ENCODE measurements at regions of chr14 and their contacts with region 1.

Region 1: GRCh38 chr14:73825551-73826188 is 26.0 kb upstream of the PTGR2 start:
- DNase-seq: peak; percentile 64 to 89
- ATAC-seq: peak; percentile 95 to 100 (median 99)
- H3K4me3 ChIP-seq: no peak overlapping the region
- H3K4me3 Mint-ChIP-seq: no peak overlapping the region
- H3K27ac ChIP-seq: no peak overlapping the region
- H3K27ac Mint-ChIP-seq: no peak overlapping the region
- H3K4me1 ChIP-seq: peaks cover 3% of the 10 kb centered on the region
- H3K4me1 Mint-ChIP-seq: peaks cover 0 to 7% of the 10 kb centered on the region in 2 donors
- H3K27me3 ChIP-seq: no peaks in the 10 kb centered on the region
- H3K27me3 Mint-ChIP-seq: no peaks in the 10 kb centered on the region
- CTCF ChIP-seq: peak; percentile 90

Region 2: DNA sequence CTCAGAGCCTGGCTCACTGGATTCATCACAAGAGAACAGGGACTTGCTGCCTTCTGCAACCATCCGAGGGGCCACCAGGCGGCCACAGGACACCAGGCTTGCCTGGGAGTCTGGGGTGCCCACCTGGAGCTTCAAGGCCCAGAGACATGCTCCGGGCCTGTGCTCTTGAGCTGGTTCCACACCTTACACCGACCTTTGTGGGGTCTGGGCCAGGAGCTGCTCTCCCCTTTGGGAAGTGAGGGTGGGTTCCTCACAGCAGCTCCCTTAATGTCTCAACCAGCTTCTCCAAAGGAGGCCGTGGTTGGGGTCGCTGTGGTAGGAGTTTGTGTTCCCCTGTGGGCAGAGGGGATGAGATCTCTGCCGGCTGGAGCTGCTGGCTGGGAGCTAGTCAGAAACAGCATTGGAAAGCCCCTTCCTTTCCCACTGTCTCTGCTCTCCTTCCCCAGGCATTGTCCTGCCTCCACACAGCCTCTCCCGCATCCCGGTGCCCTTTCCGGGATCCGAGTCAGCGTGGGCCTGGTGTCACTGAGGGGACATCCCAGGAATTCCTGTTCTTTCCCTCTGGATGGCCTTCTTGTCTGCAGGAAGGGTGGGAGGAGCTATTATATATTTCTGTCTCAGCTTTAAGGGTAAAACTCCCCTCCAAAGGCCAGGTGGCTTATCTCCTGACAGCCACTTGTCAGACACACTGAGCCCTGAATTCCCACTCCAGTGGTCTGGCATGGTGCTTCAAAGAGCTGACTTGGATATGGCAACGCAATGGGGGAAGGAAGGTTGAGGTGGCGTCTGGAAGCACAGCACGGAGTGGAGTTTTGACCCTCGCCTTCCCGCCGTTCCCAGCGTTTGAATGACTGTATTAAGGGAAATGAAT is 593.5 kb before region 1 on chr14:
- intact Hi-C with region 1: no loop called
- DNase-seq: no peak
- ATAC-seq: peak in 1 of 3 donors; percentile 37
- H3K4me3 ChIP-seq: no peak overlapping the region
- H3K4me3 Mint-ChIP-seq: no peak overlapping the region
- H3K27ac ChIP-seq: no peak overlapping the region
- H3K27ac Mint-ChIP-seq: no peak overlapping the region
- H3K4me1 ChIP-seq: peaks cover 4% of the 10 kb centered on the region
- H3K4me1 Mint-ChIP-seq: peaks cover 5 to 6% of the 10 kb centered on the region in 2 donors
- H3K27me3 ChIP-seq: peaks cover 13% of the 10 kb centered on the region
- H3K27me3 Mint-ChIP-seq: peaks cover 35 to 40% of the 10 kb centered on the region in 2 donors
- CTCF ChIP-seq: no peak

Region 3: DNA sequence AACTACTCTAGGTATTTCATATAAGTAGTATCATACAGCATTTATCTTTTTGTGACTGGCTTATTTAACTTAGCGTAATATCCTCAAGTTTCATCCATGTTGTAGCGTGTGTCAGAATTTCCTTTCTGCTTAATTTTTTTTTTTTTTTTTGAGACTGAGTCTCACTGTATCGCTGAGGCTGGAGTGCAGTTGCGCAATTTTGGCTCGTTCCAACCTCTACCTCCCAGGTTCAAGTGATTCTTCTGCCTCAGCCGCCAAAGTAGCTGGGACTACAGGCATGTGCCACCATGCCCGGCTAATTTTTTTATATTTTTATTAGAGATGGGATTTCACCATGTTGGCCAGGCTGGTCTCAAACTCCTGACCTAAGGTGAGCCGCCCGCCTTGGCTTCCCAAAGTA is 140.3 kb before region 1 on chr14:
- intact Hi-C with region 1: no loop called
- DNase-seq: no peak
- ATAC-seq: no peak
- H3K4me3 ChIP-seq: no peak overlapping the region
- H3K4me3 Mint-ChIP-seq: no peak overlapping the region
- H3K27ac ChIP-seq: no peak overlapping the region
- H3K27ac Mint-ChIP-seq: no peak overlapping the region
- H3K4me1 ChIP-seq: no peaks in the 10 kb centered on the region
- H3K4me1 Mint-ChIP-seq: no peaks in the 10 kb centered on the region
- H3K27me3 ChIP-seq: no peaks in the 10 kb centered on the region
- H3K27me3 Mint-ChIP-seq: no peaks in the 10 kb centered on the region
- CTCF ChIP-seq: no peak

Region 4: GRCh38 chr14:73728717-73729330 is 96.8 kb before region 1 on chr14:
- intact Hi-C with region 1: loop called (anchors 1 kb)
- DNase-seq: peak; percentile 83 to 92
- ATAC-seq: peak; percentile 89 to 97 (median 90)
- H3K4me3 ChIP-seq: no peak overlapping the region
- H3K4me3 Mint-ChIP-seq: no peak overlapping the region
- H3K27ac ChIP-seq: no peak overlapping the region
- H3K27ac Mint-ChIP-seq: peak overlapping the region; percentile 67 to 74
- H3K4me1 ChIP-seq: peaks cover 7% of the 10 kb centered on the region
- H3K4me1 Mint-ChIP-seq: peaks cover 16 to 24% of the 10 kb centered on the region in 2 donors
- H3K27me3 ChIP-seq: no peaks in the 10 kb centered on the region
- H3K27me3 Mint-ChIP-seq: no peaks in the 10 kb centered on the region
- CTCF ChIP-seq: peak; percentile 92

Region 5: GRCh38 chr14:73753959-73754882 is 71.4 kb before region 1 on chr14:
- intact Hi-C with region 1: loop called (anchors 1 kb)
- DNase-seq: peak in 1 of 2 donors; percentile 71
- ATAC-seq: peak; percentile 11 to 27 (median 13)
- H3K4me3 ChIP-seq: peak overlapping the region; percentile 12
- H3K4me3 Mint-ChIP-seq: peak overlapping the region; percentile 70
- H3K27ac ChIP-seq: peak overlapping the region; percentile 67
- H3K27ac Mint-ChIP-seq: peak overlapping the region; percentile 92 to 96
- H3K4me1 ChIP-seq: peaks cover 98% of the 10 kb centered on the region
- H3K4me1 Mint-ChIP-seq: peaks cover 86 to 100% of the 10 kb centered on the region in 2 donors
- H3K27me3 ChIP-seq: no peaks in the 10 kb centered on the region
- H3K27me3 Mint-ChIP-seq: no peaks in the 10 kb centered on the region
- CTCF ChIP-seq: no peak

Region 6: DNA sequence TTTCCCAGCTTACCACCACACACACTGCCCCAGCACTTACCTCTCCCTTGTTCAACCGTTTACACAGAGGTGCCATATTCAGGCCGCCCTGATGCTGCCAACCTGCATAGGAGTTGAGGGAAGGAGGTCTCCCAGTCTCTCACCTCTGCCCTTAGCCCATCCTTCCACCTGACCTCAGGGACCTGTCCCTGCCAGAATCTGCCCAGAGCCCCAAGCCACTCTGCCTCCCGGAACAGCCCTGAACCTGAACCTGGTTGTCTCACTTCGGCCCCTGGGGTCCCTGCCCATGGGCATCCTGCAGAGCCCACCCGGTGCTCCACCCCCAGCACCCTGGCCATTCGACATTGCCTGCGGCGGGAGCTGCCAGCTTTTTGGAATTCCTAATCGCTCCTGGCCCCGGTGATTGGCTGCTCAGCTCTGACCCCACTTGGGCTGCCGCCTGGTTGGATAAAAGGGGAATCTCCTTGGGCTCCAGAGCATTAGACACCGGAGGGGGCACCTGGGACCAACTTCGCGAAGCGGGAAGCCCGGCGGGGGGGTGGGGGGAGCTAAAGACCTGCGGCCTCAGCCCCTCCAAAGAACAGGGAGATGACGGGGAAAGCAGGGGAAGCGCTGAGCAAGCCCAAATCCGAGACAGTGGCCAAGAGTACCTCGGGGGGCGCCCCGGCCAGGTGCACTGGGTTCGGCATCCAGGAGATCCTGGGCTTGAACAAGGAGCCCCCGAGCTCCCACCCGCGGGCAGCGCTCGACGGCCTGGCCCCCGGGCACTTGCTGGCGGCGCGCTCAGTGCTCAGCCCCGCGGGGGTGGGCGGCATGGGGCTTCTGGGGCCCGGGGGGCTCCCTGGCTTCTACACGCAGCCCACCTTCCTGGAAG is 413.5 kb after region 1 on chr14 and contains the start of gene VSX2:
- intact Hi-C with region 1: no loop called
- DNase-seq: no peak
- ATAC-seq: no peak
- H3K4me3 ChIP-seq: no peak within 1 kb of the TSS
- H3K4me3 Mint-ChIP-seq: no peak within 1 kb of the TSS
- H3K27ac ChIP-seq: no peak within 1 kb of the TSS
- H3K27ac Mint-ChIP-seq: no peak within 1 kb of the TSS
- H3K4me1 ChIP-seq: peaks cover 16% of the 10 kb centered on the region
- H3K4me1 Mint-ChIP-seq: peaks cover 6 to 10% of the 10 kb centered on the region in 2 donors
- H3K27me3 ChIP-seq: peaks cover 57% of the 10 kb centered on the region
- H3K27me3 Mint-ChIP-seq: peaks cover 65 to 71% of the 10 kb centered on the region in 2 donors
- CTCF ChIP-seq: no peak
- total RNA-seq, gene VSX2: not detected

Measured in natural killer cell (primary cell).